Activated CD4-positive, alpha-beta T cell treated with anti-CD3 and anti-CD28 coated beads, Interleukin-2, amount 10 ng/mL, durations not matched to agents 24 days and 14 days (primary cell): ENCODE measurements at regions of chr1 and their contacts with region 1.

Region 1: GRCh38 chr1:14983277-14983676 is 170.3 kb upstream of the TMEM51 start:
- DNase-seq: no peak
- H3K4me3 Mint-ChIP-seq: no peak overlapping the region
- H3K27ac Mint-ChIP-seq: no peak overlapping the region
- H3K4me1 Mint-ChIP-seq: peaks cover 5% of the 10 kb centered on the region
- H3K27me3 Mint-ChIP-seq: no peaks in the 10 kb centered on the region

Region 2: DNA sequence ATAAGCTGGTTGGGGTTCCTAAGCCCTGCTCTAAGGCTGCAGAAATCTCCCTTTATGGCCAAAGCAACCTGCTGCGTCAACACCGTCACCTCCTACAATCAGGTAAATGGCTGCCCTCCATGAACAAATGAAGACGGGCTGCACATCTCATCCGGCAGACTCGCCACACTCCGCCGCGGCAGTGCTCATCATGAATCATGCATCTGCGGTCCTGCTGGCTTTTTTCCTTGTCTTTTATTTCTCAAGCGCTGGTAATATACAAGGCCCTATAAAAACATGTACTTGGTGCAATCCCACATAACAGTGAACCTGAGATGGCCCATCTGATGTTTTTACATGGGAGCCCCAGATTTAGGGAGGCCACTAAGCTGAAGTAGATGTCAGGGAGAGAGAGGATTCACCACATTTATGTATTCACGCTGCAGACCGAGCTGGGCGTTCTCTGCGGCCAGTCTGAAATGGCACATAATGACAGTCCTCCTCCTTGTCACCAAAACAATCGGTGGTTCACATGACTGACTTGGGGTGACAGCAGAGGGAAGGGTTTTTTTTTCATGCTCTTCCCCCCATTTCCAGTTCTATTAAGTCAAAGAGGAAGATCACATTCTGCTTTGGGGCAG is 293.2 kb before region 1 on chr1:
- intact Hi-C with region 1: no loop called
- DNase-seq: no peak
- H3K4me3 Mint-ChIP-seq: no peak overlapping the region
- H3K27ac Mint-ChIP-seq: no peak overlapping the region
- H3K4me1 Mint-ChIP-seq: no peaks in the 10 kb centered on the region
- H3K27me3 Mint-ChIP-seq: no peaks in the 10 kb centered on the region

Region 3: GRCh38 chr1:14939527-14940284 is 43.6 kb before region 1 on chr1:
- intact Hi-C with region 1: no loop called
- DNase-seq: no peak
- H3K4me3 Mint-ChIP-seq: no peak overlapping the region
- H3K27ac Mint-ChIP-seq: no peak overlapping the region
- H3K4me1 Mint-ChIP-seq: no peaks in the 10 kb centered on the region
- H3K27me3 Mint-ChIP-seq: no peaks in the 10 kb centered on the region

Region 4: DNA sequence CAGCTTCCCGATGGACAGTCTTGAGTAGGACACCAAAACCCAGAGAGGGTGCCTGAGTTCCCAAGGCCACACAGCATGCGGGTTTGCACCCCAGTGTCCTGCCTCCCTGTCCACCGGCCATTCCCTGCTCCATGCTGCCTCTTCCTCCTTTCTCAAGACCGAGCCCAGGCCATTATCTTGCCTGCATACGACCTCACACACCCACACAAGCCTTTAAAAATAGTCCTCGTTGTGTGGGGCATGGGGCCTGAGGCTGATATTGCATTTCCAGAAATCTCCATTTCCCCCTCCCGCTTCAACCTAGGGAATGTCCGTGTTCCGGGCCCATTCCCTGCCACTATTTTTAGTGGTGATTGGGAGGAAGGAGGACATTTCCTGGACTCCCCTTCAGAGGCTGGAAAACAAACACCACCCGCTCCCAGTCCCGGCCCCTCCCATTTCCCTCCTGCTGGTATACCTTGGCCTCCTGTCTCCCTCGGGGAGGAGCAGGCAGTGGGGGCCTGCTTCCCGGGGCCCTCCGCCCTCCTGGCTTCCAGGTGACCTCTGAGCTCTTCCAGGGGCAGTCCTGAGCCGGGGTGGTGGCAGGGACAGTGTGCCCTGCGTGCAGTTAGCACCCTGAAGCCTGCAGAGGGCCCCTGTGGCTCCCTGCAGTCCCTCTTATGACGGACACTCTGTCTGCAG is 37.9 kb after region 1 on chr1:
- intact Hi-C with region 1: loop called (anchors 2 kb)
- DNase-seq: no peak
- H3K4me3 Mint-ChIP-seq: no peak overlapping the region
- H3K27ac Mint-ChIP-seq: no peak overlapping the region
- H3K4me1 Mint-ChIP-seq: no peaks in the 10 kb centered on the region
- H3K27me3 Mint-ChIP-seq: no peaks in the 10 kb centered on the region